Caco-2 (cell line): ENCODE measurements at regions of chr5 and their contacts with region 1.

Region 1: GRCh38 chr5:108919591-108920326 is 172.1 kb downstream of the FER start:
- DNase-seq: no peak
- H3K4me3 ChIP-seq: no peak overlapping the region
- H3K4me3 Mint-ChIP-seq: no peak overlapping the region
- H3K27ac Mint-ChIP-seq: no peak overlapping the region
- H3K4me1 ChIP-seq: peaks cover 8% of the 10 kb centered on the region; the same call in 1 of the 2 replicates
- H3K4me1 Mint-ChIP-seq: peaks cover 16% of the 10 kb centered on the region
- H3K27me3 ChIP-seq: no peaks in the 10 kb centered on the region
- H3K27me3 Mint-ChIP-seq: no peaks in the 10 kb centered on the region
- CTCF ChIP-seq: peak; percentile 18 to 42

Region 2: DNA sequence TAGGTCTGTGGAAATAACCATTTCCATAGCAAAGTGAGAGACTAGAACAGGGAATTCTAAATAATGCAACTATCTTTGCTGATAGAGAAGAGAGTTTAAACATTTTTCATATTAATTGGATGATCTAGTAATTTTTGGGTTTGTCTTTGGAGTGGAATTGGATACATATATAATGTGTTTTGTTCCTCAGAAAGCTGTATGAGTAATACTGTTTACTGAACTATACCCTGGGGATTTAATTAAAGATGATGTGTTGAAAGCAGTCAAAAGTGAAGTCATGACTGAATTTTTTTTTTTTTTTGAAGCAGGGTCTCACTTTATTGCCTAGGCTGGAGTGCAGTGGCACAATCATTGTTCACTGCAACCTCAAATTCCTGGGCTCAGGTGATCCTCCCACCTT is 154.1 kb before region 1 on chr5:
- CTCF ChIA-PET with region 1: no interaction called
- POLR2A ChIA-PET with region 1: no interaction called
- intact Hi-C with region 1: no loop called
- DNase-seq: no peak
- H3K4me3 ChIP-seq: no peak overlapping the region
- H3K4me3 Mint-ChIP-seq: no peak overlapping the region
- H3K27ac Mint-ChIP-seq: no peak overlapping the region
- H3K4me1 ChIP-seq: 0 out of 2 replicates have a peak, but pooled peaks cover 17% of the 10 kb centered on the region
- H3K4me1 Mint-ChIP-seq: peaks cover 28% of the 10 kb centered on the region
- H3K27me3 ChIP-seq: no peaks in the 10 kb centered on the region
- H3K27me3 Mint-ChIP-seq: no peaks in the 10 kb centered on the region
- CTCF ChIP-seq: no peak

Region 3: DNA sequence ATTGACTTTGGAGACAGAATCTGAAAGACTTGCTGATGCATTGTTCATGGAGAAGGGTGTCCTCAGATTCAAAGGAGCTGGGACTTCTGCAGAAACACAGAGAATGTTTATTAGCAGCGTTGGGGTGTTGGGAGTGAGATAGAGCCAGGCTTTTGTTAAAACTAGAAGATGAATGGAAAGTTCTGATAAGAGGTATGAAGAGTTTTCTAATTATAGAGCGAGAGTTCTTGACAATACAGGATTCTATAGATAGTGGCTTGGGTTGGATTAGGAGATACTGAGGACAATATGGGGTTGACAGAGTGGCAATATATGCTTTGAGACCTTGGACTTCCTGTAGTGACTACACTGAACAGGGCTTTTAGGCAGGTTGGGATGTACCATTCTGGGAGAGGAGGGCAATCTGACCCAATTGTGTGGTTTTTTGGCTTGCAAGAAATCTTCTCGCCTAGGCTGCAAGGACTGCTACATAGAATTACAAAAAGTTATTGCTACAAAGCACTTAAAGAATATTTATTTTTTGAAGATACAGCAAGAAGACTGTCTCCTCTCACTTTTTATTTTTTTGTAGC is 89.0 kb before region 1 on chr5:
- CTCF ChIA-PET with region 1: no interaction called
- POLR2A ChIA-PET with region 1: no interaction called
- intact Hi-C with region 1: no loop called
- DNase-seq: no peak
- H3K4me3 ChIP-seq: no peak overlapping the region
- H3K4me3 Mint-ChIP-seq: no peak overlapping the region
- H3K27ac Mint-ChIP-seq: no peak overlapping the region
- H3K4me1 ChIP-seq: no peaks in the 10 kb centered on the region
- H3K4me1 Mint-ChIP-seq: peaks cover 6% of the 10 kb centered on the region
- H3K27me3 ChIP-seq: no peaks in the 10 kb centered on the region
- H3K27me3 Mint-ChIP-seq: no peaks in the 10 kb centered on the region
- CTCF ChIP-seq: no peak

Region 4: DNA sequence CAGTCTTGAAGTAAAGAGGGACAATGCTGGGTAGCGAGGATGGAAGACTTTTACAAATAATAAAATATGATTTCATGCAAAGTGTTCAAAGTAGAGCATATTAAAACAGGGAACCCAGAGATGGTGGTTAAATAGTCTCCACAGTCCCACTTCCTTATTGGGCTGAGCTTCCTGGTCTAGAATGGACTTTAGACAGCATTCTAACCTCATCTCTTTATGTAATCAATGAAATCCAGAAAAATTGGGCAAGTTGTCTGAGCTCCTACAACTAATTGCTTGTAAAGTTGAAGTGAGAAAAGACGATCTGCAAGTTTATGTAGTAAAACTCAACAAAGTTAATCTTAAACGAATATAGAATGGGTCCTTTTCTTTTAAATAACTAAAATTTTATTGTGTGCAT is 161.1 kb after region 1 on chr5:
- CTCF ChIA-PET with region 1: no interaction called
- POLR2A ChIA-PET with region 1: no interaction called
- intact Hi-C with region 1: loop called (anchors 10 kb)
- DNase-seq: peak in 1 of 2 experiments; percentile 10
- H3K4me3 ChIP-seq: no peak overlapping the region
- H3K4me3 Mint-ChIP-seq: no peak overlapping the region
- H3K27ac Mint-ChIP-seq: peak overlapping the region; percentile 74
- H3K4me1 ChIP-seq: peaks cover 17% of the 10 kb centered on the region
- H3K4me1 Mint-ChIP-seq: peaks cover 15% of the 10 kb centered on the region
- H3K27me3 ChIP-seq: no peaks in the 10 kb centered on the region
- H3K27me3 Mint-ChIP-seq: no peaks in the 10 kb centered on the region
- CTCF ChIP-seq: no peak